PC-9 (cell line): ENCODE measurements at regions of chr5 and their contacts with region 1.

Region 1: DNA sequence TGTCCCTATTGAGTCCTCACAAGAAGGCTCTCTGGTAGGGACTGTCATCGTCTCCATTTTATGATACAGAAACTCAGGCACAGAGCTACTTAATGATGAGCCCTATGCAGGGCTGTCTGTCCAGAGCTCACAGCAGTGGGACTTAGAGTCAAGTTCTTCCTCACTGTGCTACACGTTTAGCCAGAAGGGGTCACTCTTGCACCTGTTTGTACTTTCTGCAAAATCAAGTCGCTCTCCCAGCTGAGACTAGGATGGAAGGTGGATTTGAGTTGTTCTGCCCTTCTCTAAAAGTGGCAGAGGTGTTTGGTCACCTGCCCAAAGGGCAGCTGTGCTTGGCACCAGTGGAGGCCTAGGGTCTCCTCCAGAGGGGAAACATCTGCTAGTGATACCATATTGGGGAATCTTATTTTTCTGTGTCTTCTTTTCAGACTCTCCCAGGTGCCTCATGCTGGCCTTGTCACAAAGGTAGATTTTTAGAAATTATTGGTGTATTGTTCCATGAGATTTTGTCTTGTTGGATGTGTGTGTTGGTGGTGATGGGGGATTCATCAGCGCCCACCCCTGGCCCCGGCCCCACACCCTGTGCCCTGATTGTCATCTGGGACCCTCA is 104.2 kb downstream of the PPARGC1B start:
- DNase-seq: peak; percentile 54 to 66
- H3K4me3 ChIP-seq: no peak overlapping the region
- H3K27ac ChIP-seq: no peak overlapping the region
- H3K4me1 ChIP-seq: peaks cover 8% of the 10 kb centered on the region
- H3K27me3 ChIP-seq: no peaks in the 10 kb centered on the region
- CTCF ChIP-seq: peak; percentile 82

Region 2: GRCh38 chr5:148875205-148875875 is 959.0 kb before region 1 on chr5:
- CTCF ChIA-PET with region 1: no interaction called
- POLR2A ChIA-PET with region 1: no interaction called
- intact Hi-C with region 1: no loop called
- DNase-seq: no peak
- H3K4me3 ChIP-seq: no peak overlapping the region
- H3K27ac ChIP-seq: no peak overlapping the region
- H3K4me1 ChIP-seq: no peaks in the 10 kb centered on the region
- H3K27me3 ChIP-seq: no peaks in the 10 kb centered on the region
- CTCF ChIP-seq: no peak

Region 3: DNA sequence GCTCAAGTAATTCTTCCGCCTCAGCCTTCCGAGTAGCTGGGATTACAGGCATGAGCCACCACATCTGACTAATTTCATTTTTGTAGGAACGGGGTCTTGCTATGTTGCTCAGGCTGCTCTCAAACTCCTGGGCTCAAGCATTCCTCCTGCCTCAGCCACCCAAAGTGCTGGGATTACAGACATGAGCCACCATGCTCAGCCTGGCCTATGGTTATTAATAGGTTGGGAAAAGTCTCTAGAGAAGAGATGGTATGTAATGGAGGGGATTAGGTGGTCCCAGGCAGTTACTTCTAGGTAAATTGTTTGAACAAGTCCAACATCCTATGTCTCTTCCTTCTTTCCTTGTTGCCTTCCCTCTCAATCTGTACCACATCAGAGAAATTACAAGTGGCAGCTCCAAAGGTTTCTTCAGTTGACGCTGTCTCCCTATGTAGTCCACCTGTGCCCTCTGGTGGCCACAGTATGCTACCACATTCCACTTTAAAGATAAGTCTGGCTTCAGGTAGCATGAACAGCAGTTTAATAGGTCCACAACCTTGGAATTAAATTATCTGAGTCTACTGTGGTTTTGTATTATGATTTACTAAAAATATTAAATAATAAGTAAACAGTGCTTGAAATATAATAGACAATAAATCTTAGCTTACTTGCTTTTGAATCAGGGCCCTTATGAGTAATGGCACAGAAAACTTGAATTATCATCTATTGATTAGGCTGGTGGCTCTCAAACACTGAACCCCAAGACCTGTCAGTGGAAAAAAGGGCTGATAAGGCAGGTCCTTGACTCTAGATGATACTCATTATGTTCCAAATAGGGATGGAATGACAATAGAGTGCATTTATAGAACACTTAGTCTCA is 156.4 kb after region 1 on chr5:
- CTCF ChIA-PET with region 1: interaction called, 22 read pairs
- POLR2A ChIA-PET with region 1: interaction called, 5 read pairs
- intact Hi-C with region 1: loop called (anchors 1 kb)
- DNase-seq: peak; percentile 62 to 70
- H3K4me3 ChIP-seq: no peak overlapping the region
- H3K27ac ChIP-seq: no peak overlapping the region
- H3K4me1 ChIP-seq: peaks cover 15% of the 10 kb centered on the region
- H3K27me3 ChIP-seq: no peaks in the 10 kb centered on the region
- CTCF ChIP-seq: peak; percentile 97

Region 4: GRCh38 chr5:150129813-150130492 is 295.6 kb after region 1 on chr5:
- CTCF ChIA-PET with region 1: no interaction called
- POLR2A ChIA-PET with region 1: interaction called, 4 read pairs
- intact Hi-C with region 1: loop called (anchors 2 kb)
- DNase-seq: peak; percentile 50 to 72
- H3K4me3 ChIP-seq: peak overlapping the region; percentile 42; the same call in 1 of the 2 replicates
- H3K27ac ChIP-seq: no peak overlapping the region
- H3K4me1 ChIP-seq: no peaks in the 10 kb centered on the region
- H3K27me3 ChIP-seq: no peaks in the 10 kb centered on the region; the same call in 1 of the 2 replicates
- CTCF ChIP-seq: peak; percentile 94

Region 5: GRCh38 chr5:150155258-150156026 is 321.1 kb after region 1 on chr5 and contains the start of gene PDGFRB:
- CTCF ChIA-PET with region 1: no interaction called
- POLR2A ChIA-PET with region 1: no interaction called
- intact Hi-C with region 1: no loop called
- DNase-seq: peak in 1 of 2 experiments; percentile 9
- H3K4me3 ChIP-seq: no peak within 1 kb of the TSS
- H3K27ac ChIP-seq: no peak within 1 kb of the TSS
- H3K4me1 ChIP-seq: no peaks in the 10 kb centered on the region
- H3K27me3 ChIP-seq: peaks cover 9% of the 10 kb centered on the region; the same call in 1 of the 2 replicates
- CTCF ChIP-seq: no peak
- total RNA-seq, gene PDGFRB: 0.08 TPM in 1 of 2 replicates, not detected in the other

Region 6: DNA sequence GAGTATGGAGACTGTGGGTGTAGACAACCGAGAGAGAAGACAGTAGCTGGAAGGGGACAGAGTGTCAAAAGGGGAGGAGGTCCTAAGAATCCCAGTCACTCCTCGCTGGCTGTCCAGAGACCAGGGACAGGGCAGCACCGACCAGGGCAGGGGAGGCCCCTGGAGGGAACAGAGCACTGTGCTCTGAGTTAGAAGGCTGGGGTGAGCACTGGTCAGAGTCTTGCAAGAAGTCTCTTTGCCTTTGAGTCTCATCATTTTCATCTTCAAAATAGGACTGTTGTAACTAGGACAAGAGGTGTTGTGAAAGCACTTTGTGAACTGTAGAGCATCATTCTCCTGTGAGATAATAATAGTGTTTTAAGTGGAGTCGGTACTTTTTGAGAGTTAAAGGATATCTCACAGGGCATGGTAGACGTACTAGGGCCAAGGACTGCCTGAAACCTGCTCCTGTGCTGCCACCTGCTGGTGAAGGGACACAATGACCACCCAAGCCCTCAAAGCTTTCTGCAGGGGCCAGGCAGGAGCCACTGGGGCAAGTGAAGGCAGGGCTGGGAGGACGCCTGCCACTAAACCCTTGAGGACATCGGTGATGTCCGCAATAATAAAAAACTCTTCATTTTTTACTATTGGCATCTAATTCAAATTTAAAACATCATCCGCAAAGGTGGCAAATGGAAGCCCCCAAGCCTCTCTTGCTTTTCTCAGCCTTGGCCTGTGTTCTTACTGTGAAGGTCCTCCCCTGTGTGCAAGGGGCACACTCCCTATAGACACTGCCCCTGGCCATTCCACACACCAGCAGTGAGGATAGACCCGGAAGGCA is 383.7 kb after region 1 on chr5:
- CTCF ChIA-PET with region 1: interaction called, 4 read pairs
- POLR2A ChIA-PET with region 1: no interaction called
- intact Hi-C with region 1: loop called (anchors 1 kb)
- DNase-seq: peak; percentile 51 to 84
- H3K4me3 ChIP-seq: no peak overlapping the region
- H3K27ac ChIP-seq: no peak overlapping the region
- H3K4me1 ChIP-seq: 0 out of 2 replicates have a peak, but pooled peaks cover 7% of the 10 kb centered on the region
- H3K27me3 ChIP-seq: no peaks in the 10 kb centered on the region
- CTCF ChIP-seq: peak; percentile 96